ENCODE measurements at regions of chr5 and their contacts with region 1.

Region 1: GRCh38 chr5:177113566-177114424 is 19.8 kb upstream of the NSD1 start:
- DNase-seq: peak; percentile 79 to 89 (median 84)
- ATAC-seq: peak; percentile 71
- H3K4me3 ChIP-seq: no peak overlapping the region
- H3K27ac ChIP-seq: no peak overlapping the region
- H3K4me1 ChIP-seq: peaks cover 15 to 29% of the 10 kb centered on the region in 2 experiments; a peak in 4 of 5 replicates
- H3K27me3 ChIP-seq: no peaks in the 10 kb centered on the region
- CTCF ChIP-seq: peak; percentile 94 to 99 (median 98)
- EP300 ChIP-seq: peak; percentile 41; the same call in 1 of the 2 replicates
- POLR2A ChIP-seq: no peak
- RAD21 ChIP-seq: peak; percentile 95 to 96

Region 2: DNA sequence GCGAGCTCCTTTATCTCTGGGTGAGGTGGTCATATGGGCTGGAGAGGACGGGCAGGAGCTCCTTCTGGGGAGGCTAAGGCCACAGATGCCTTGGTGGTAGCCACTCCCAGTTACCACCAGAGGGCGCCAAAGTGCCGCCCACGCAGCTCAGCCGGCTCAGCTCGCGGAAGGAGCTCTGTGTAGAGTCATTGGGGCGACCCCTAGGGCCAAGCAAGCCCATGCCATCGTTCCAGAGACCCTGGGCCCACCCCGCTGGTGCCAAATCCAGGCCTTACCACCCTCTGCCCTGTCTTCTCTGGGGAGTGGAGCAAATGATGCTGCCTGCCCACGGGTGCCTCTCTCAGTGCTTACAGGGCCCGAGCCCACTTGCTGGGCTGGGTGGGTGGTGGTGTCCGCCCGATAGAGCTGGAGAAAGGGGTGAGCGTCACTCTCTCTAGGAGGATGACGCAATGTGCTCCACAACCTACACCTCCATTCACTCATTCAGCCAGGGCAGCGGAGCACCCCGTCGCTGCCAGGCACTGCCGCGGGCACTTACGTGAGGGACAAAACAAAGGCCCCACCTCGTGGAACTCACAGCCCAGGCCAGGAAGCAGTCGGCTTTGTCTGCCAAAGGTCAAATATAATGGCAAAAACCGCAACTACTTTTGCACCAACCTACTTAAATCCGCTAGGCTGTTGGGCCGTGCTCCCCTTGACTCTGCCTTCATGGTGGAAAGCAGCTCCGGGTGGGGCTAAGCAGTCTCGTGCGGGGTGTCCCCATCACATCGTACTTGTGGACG is 452.7 kb before region 1 on chr5:
- CTCF ChIA-PET with region 1: interaction called, 5 read pairs
- POLR2A ChIA-PET with region 1: interaction called, 6 read pairs
- in situ Hi-C with region 1: loop called (anchors 5 kb)
- intact Hi-C with region 1: loop called (anchors 1 kb)
- DNase-seq: peak; percentile 89 to 92 (median 90)
- ATAC-seq: peak; percentile 96
- H3K4me3 ChIP-seq: no peak overlapping the region
- H3K27ac ChIP-seq: no peak overlapping the region
- H3K4me1 ChIP-seq: peaks cover 0 to 24% of the 10 kb centered on the region in 2 experiments; a peak in 2 of 5 replicates
- H3K27me3 ChIP-seq: peaks cover 20 to 47% of the 10 kb centered on the region in 2 experiments
- CTCF ChIP-seq: peak; percentile 94 to 98 (median 96)
- EP300 ChIP-seq: no peak
- POLR2A ChIP-seq: no peak
- RAD21 ChIP-seq: peak; percentile 87 to 97

Region 3: DNA sequence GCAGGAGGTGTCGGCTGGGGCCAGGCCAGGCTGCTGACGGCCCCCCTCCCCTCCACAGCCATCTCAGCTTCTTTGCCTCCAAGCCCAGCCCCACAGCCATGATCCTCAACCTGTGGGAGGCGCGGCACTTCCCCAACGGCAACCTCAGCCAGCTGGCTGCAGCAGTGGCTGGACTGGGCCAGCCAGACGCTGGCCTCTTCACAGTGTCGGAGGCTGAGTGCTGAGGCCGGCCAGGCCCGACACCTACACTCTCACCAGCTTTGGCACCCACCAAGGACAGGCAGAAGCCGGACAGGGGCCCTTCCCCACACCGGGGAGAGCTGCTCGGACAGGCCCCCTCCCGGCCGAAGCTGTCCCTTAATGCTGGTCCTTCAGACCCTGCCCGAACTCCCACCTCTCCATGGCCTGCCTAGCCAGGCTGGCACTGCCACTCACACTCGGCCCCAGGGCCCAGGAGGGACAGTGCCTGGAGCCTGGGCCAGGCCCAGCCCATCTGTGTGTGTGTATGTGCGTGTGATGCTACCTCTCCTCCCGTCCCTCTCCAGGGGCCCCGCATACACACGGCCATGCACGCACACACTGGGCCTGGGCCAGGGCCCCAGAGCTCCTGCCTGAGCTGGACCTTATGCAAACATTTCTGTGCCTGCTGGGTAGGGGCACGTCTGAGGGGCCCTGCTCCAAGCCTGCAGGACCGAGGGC is 234.0 kb before region 1 on chr5:
- CTCF ChIA-PET with region 1: no interaction called
- POLR2A ChIA-PET with region 1: no interaction called
- in situ Hi-C with region 1: no loop called
- intact Hi-C with region 1: no loop called
- DNase-seq: no peak
- ATAC-seq: peak; percentile 50
- H3K4me3 ChIP-seq: no peak overlapping the region
- H3K27ac ChIP-seq: no peak overlapping the region
- H3K4me1 ChIP-seq: peaks cover 0 to 47% of the 10 kb centered on the region in 2 experiments; a peak in 2 of 5 replicates
- H3K27me3 ChIP-seq: peaks cover 82 to 98% of the 10 kb centered on the region in 2 experiments
- CTCF ChIP-seq: no peak
- EP300 ChIP-seq: no peak
- POLR2A ChIP-seq: no peak
- RAD21 ChIP-seq: no peak

Region 4: DNA sequence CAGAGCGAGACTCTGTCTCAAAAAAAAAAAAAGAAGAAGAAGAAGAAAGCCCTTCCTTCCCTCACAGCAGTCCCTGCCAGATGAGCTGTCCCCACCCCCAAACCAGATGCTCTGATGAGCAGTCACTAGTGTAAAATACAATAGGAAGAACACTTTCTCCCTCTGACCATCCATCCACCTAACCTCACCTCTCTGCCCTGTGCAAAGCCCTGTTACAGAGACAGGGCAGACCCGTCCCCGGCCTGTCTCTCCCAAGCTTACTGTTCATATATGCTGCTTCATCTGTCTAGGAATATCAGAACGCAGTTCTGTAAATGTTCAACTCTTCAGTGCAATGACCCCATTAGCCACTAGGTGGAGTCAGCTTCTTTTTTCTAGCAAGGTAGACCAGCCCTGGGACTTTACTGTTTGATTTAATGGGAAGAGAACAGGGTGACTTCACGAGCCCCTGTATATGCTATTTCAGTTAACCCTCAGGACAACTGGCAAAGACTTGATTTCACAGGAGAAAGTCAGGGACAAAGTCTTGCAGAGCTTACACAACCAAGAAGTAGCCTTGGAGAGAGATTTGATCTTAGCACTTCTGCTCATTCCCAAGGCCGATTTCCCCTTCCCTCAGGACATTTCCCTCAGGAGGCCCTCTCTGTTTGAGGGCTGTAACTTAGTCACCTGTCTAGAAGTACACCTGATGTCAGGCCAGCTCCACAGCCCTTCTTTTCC is 42.0 kb before region 1 on chr5:
- CTCF ChIA-PET with region 1: interaction called, 20 read pairs
- POLR2A ChIA-PET with region 1: interaction called, 3 read pairs
- in situ Hi-C with region 1: no loop called
- intact Hi-C with region 1: loop called (anchors 1 kb)
- DNase-seq: peak; percentile 66 to 85 (median 73)
- ATAC-seq: peak; percentile 95
- H3K4me3 ChIP-seq: no peak overlapping the region
- H3K27ac ChIP-seq: no peak overlapping the region
- H3K4me1 ChIP-seq: no peaks in the 10 kb centered on the region; a peak in 1 of 5 replicates
- H3K27me3 ChIP-seq: no peaks in the 10 kb centered on the region
- CTCF ChIP-seq: peak; percentile 82 to 91 (median 89)
- EP300 ChIP-seq: no peak
- POLR2A ChIP-seq: no peak
- RAD21 ChIP-seq: peak; percentile 44 to 73; a peak in 3 of 4 replicates

Region 5: GRCh38 chr5:177311723-177312648 is 198.2 kb after region 1 on chr5 and contains the start of gene MXD3:
- CTCF ChIA-PET with region 1: interaction called, 4 read pairs
- POLR2A ChIA-PET with region 1: interaction called, 5 read pairs
- in situ Hi-C with region 1: no loop called
- intact Hi-C with region 1: loop called (anchors 1 kb)
- DNase-seq: peak; percentile 96 to 98 (median 97)
- ATAC-seq: peak; percentile 86
- H3K4me3 ChIP-seq: peak within 1 kb of the TSS; percentile 62
- H3K27ac ChIP-seq: peak within 1 kb of the TSS; percentile 100
- H3K4me1 ChIP-seq: peaks cover 23 to 77% of the 10 kb centered on the region in 2 experiments
- H3K27me3 ChIP-seq: no peaks in the 10 kb centered on the region
- CTCF ChIP-seq: no peak
- EP300 ChIP-seq: no peak
- POLR2A ChIP-seq: peak; percentile 81
- RAD21 ChIP-seq: no peak
- polyA plus RNA-seq, gene MXD3: 0.28 to 0.59 TPM

Region 6: DNA sequence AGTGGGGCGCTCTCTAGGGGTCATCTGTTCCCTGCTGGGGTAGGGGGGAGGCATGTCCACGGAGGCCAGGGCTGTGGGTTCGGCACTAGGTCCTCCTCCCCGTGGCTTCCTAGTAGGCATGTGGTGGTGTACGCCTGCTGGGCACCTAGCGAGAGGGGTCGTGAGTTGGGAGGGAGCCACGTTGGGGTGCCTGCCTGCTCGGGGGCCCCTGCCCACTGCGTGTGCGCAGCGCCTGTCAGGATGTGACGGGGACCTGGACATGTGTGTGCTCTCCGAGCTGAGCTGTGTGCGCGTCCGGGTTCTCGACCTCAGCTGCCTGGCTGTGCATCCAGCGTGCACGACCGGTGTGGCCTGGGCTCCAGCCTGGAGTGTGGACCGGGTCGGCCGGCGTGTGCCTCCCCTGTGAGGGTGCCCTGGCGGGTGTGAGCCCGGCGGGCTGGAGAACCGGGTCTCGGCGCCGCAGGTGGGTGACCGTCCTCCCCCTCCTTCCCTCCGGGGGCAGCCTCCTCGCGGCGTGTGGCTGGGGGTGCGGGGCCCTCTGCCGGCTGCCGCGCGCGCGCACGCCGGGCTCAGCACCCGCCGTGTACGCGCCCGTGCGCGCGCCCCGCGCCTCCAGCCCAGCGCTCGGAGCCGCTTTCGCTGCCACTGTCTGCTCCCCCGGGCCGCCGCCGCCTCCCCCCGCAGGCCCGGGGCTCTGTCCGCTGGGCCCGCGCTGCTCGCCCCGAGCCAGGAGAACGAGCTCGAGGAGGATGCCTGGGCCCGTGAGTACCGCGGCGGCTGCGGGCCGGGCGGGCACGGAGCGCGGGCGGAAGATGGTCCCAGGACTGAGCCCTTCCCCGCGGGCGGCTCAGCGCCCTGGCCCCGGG is 332.6 kb after region 1 on chr5 and contains the start of gene PRR7:
- CTCF ChIA-PET with region 1: no interaction called
- POLR2A ChIA-PET with region 1: no interaction called
- in situ Hi-C with region 1: loop called (anchors 10 kb)
- intact Hi-C with region 1: loop called (anchors 2 kb)
- DNase-seq: peak; percentile 80 to 86 (median 86)
- ATAC-seq: peak; percentile 59
- H3K4me3 ChIP-seq: peak within 1 kb of the TSS; percentile 62
- H3K27ac ChIP-seq: peak within 1 kb of the TSS; percentile 59
- H3K4me1 ChIP-seq: peaks cover 19 to 53% of the 10 kb centered on the region in 2 experiments
- H3K27me3 ChIP-seq: no peaks in the 10 kb centered on the region
- CTCF ChIP-seq: peak; percentile 11 to 32 (median 17); a peak in 2 of 6 replicates
- EP300 ChIP-seq: no peak
- POLR2A ChIP-seq: peak; percentile 74
- RAD21 ChIP-seq: peak; percentile 22; a peak in 2 of 4 replicates
- polyA plus RNA-seq, gene PRR7: not detected

Measured in K562 (cell line).